ENCODE measurements at regions of chr22 and their contacts with region 1.

Region 1: DNA sequence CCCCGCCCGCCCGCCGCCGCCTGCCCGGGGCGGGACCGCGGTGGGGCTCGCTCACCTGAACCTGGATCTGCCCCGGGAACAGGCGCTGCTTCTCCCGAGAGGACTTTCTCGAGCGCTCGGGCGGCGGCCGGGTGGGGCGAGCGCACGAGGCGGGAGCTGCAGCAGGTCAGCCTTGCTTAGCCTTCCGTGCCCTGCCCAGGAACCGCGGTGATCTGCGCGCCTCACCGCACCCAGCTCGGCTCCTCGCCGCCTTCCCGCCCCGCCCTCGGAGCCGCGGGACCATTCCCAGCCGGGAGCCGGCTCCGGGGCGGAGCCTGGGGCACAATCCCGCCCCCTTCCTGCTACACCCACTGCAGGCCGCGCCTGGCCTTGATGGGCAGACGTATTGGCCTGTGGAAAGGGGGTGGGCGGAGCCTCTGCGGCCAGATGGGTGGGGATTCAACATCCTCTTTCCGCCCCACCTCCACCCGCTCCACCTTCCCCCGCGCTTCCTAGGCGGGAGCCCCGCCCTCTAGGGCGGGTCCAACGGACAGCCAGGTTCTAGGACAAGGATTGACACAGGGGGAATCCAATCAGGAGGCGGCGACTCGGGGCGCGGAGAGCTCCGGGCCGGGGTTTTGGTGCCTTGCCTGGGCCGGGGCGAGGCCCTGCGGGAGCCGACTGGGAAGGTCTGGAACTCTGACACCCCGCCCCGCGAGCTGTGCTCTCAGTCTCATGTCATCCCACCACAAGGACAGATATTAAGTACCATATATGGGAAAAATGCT is at the start of gene MYH9:
- DNase-seq: peak; percentile 99
- H3K4me3 ChIP-seq: peak within 1 kb of the TSS; percentile 88 to 92
- H3K4me3 Mint-ChIP-seq: peak within 1 kb of the TSS; percentile 88 to 98 (median 94)
- H3K27ac ChIP-seq: peak within 1 kb of the TSS; percentile 80
- H3K27ac Mint-ChIP-seq: peak within 1 kb of the TSS; percentile 84 to 99 (median 97)
- H3K4me1 ChIP-seq: peaks cover 28% of the 10 kb centered on the region
- H3K4me1 Mint-ChIP-seq: peaks cover 12 to 45% (median 26%) of the 10 kb centered on the region in 4 donors
- H3K27me3 ChIP-seq: no peaks in the 10 kb centered on the region
- H3K27me3 Mint-ChIP-seq: no peaks in the 10 kb centered on the region
- total RNA-seq, gene MYH9: 717 to 734 TPM

Region 2: GRCh38 chr22:36359181-36359996 is 28.5 kb before region 1 on chr22:
- CTCF ChIA-PET with region 1: interaction called, 7 read pairs
- POLR2A ChIA-PET with region 1: interaction called, 2,535 read pairs
- intact Hi-C with region 1: loop called (anchors 1 kb)
- DNase-seq: peak in 1 of 5 donors; percentile 63
- H3K4me3 ChIP-seq: no peak overlapping the region
- H3K4me3 Mint-ChIP-seq: peak overlapping the region; percentile 35 to 89 (median 76)
- H3K27ac ChIP-seq: peak overlapping the region; percentile 55
- H3K27ac Mint-ChIP-seq: peak overlapping the region; percentile 91 to 98 (median 95)
- H3K4me1 ChIP-seq: peaks cover 100% of the 10 kb centered on the region
- H3K4me1 Mint-ChIP-seq: peaks cover 79 to 99% (median 91%) of the 10 kb centered on the region in 4 donors
- H3K27me3 ChIP-seq: no peaks in the 10 kb centered on the region
- H3K27me3 Mint-ChIP-seq: no peaks in the 10 kb centered on the region

Region 3: GRCh38 chr22:36369922-36370791 is 17.8 kb before region 1 on chr22:
- CTCF ChIA-PET with region 1: interaction called, 12 read pairs
- POLR2A ChIA-PET with region 1: interaction called, 2,535 read pairs
- intact Hi-C with region 1: loop called (anchors 2 kb)
- DNase-seq: peak in 1 of 5 donors; percentile 65
- H3K4me3 ChIP-seq: peak overlapping the region in 1 of 2 donors; percentile 32
- H3K4me3 Mint-ChIP-seq: peak overlapping the region; percentile 84 to 93 (median 88)
- H3K27ac ChIP-seq: peak overlapping the region; percentile 91
- H3K27ac Mint-ChIP-seq: peak overlapping the region; percentile 92 to 99 (median 98)
- H3K4me1 ChIP-seq: peaks cover 100% of the 10 kb centered on the region
- H3K4me1 Mint-ChIP-seq: peaks cover 74 to 100% (median 87%) of the 10 kb centered on the region in 4 donors
- H3K27me3 ChIP-seq: no peaks in the 10 kb centered on the region
- H3K27me3 Mint-ChIP-seq: no peaks in the 10 kb centered on the region

Region 4: DNA sequence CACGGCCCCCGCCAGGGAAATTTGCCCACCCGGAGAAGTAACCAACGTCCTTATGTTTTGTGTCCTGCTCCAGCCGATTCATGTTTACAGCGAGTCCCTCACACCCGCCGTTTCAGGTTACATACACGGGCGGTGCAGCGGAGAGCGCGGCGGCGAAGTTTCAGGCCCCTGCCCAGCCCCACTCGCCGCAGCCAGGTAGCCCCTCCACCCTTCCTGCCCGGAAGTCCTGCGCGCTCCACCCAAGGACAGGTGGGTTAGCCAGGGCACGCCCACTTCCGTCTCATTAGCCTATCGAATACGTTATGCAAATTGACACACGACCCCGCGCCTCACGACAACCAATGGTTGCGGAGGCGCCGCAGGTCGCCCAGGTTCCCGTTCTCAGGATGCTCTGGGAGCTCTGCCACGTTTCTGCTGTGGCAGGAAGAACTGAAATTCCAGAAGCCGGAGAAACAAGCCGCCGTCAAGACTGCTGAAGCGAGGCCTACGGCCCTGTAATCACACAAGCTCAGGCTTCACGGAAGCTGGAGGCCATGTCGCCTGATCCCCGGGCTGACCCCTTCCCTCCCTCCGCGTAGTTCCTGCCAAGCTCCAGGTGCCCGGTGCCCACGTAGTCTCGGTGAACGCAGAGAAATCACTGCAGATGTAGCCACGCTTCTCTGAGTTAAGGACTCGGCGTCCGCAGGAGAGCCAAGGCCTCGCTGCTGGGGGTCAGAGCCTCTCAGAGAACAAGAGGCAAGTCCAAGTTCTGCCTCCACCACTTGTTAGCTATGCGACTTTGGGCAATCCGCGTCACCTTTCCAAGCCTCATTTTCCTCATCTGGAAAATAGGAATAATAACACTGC is 22.2 kb after region 1 on chr22:
- CTCF ChIA-PET with region 1: interaction called, 10 read pairs
- POLR2A ChIA-PET with region 1: interaction called, 33 read pairs
- intact Hi-C with region 1: loop called (anchors 2 kb)
- DNase-seq: peak; percentile 58 to 80 (median 64)
- H3K4me3 ChIP-seq: peak overlapping the region in 1 of 2 donors; percentile 44
- H3K4me3 Mint-ChIP-seq: peak overlapping the region; percentile 61 to 79 (median 72)
- H3K27ac ChIP-seq: peak overlapping the region; percentile 49
- H3K27ac Mint-ChIP-seq: peak overlapping the region; percentile 86 to 96 (median 91)
- H3K4me1 ChIP-seq: peaks cover 65% of the 10 kb centered on the region
- H3K4me1 Mint-ChIP-seq: peaks cover 35 to 68% (median 52%) of the 10 kb centered on the region in 4 donors
- H3K27me3 ChIP-seq: no peaks in the 10 kb centered on the region
- H3K27me3 Mint-ChIP-seq: no peaks in the 10 kb centered on the region

Region 5: GRCh38 chr22:36481393-36482168 is 93.6 kb after region 1 on chr22 and contains the start of gene TXN2:
- CTCF ChIA-PET with region 1: no interaction called
- POLR2A ChIA-PET with region 1: interaction called, 8 read pairs
- intact Hi-C with region 1: loop called (anchors 1 kb)
- DNase-seq: peak; percentile 97 to 99 (median 97)
- H3K4me3 ChIP-seq: peak within 1 kb of the TSS; percentile 80 to 86
- H3K4me3 Mint-ChIP-seq: peak within 1 kb of the TSS; percentile 90 to 100 (median 98)
- H3K27ac ChIP-seq: peak within 1 kb of the TSS; percentile 80
- H3K27ac Mint-ChIP-seq: peak within 1 kb of the TSS; percentile 93 to 100 (median 99)
- H3K4me1 ChIP-seq: peaks cover 22% of the 10 kb centered on the region
- H3K4me1 Mint-ChIP-seq: peaks cover 12 to 31% (median 17%) of the 10 kb centered on the region in 4 donors
- H3K27me3 ChIP-seq: no peaks in the 10 kb centered on the region
- H3K27me3 Mint-ChIP-seq: peaks cover 0 to 3% of the 10 kb centered on the region in 2 donors
- total RNA-seq, gene TXN2: 33.5 to 34.5 TPM

Measured in CD4-positive, alpha-beta memory T cell (primary cell).